ENCODE measurements at regions of chr10 and their contacts with region 1.

Region 1: GRCh38 chr10:110279407-110279986 is 25.2 kb downstream of the SMNDC1 start:
- DNase-seq: peak; percentile 58
- ATAC-seq: peak; percentile 53
- H3K4me3 Mint-ChIP-seq: no peak overlapping the region
- H3K27ac Mint-ChIP-seq: no peak overlapping the region
- H3K4me1 Mint-ChIP-seq: peaks cover 17% of the 10 kb centered on the region
- H3K27me3 Mint-ChIP-seq: peaks cover 19% of the 10 kb centered on the region

Region 2: GRCh38 chr10:110210674-110211464 is 68.6 kb before region 1 on chr10:
- CTCF ChIA-PET with region 1: interaction called, 89 read pairs
- POLR2A ChIA-PET with region 1: interaction called, 3 read pairs
- DNase-seq: peak; percentile 94
- ATAC-seq: peak; percentile 68
- H3K4me3 Mint-ChIP-seq: peak overlapping the region; percentile 90
- H3K27ac Mint-ChIP-seq: peak overlapping the region; percentile 84
- H3K4me1 Mint-ChIP-seq: peaks cover 56% of the 10 kb centered on the region
- H3K27me3 Mint-ChIP-seq: peaks cover 15% of the 10 kb centered on the region

Region 3: DNA sequence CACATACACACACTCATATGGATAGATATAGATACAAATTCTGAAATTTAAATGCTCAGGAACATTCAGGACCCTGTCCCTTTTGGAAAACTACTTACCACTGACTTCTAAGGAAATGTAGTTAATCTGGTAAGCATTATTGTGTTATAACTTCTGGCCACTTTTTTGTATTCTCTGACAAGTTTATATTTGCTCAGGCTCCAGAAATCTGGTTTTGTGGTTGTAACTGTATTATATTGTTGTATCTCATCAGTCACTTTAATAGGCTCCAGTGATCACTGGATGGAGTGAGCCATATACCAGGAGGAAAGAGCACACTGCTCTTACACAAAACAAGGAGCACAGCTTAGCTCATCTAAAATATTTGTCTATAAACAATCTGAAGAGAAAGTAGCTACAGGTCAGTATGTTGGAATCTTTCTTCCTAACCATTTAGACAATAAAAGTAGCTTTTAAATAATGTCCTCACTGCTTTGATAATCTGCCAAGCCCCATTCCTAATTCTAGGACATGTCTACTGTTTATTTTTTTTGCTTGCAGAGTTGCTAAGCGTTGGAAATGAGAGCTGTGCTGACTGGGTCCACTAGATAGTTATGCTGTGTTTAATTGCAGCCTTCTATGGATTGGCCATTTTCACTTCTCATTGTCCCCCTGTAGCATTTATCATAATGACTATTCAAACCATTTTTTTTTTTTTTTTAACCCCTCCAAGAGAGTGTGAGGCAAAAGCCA is 18.6 kb before region 1 on chr10:
- CTCF ChIA-PET with region 1: interaction called, 14 read pairs
- POLR2A ChIA-PET with region 1: no interaction called
- DNase-seq: no peak
- ATAC-seq: no peak
- H3K4me3 Mint-ChIP-seq: no peak overlapping the region
- H3K27ac Mint-ChIP-seq: no peak overlapping the region
- H3K4me1 Mint-ChIP-seq: no peaks in the 10 kb centered on the region
- H3K27me3 Mint-ChIP-seq: peaks cover 12% of the 10 kb centered on the region

Region 4: GRCh38 chr10:110326351-110327032 is 47.0 kb after region 1 on chr10:
- CTCF ChIA-PET with region 1: no interaction called
- POLR2A ChIA-PET with region 1: no interaction called
- DNase-seq: no peak
- ATAC-seq: no peak
- H3K4me3 Mint-ChIP-seq: no peak overlapping the region
- H3K27ac Mint-ChIP-seq: no peak overlapping the region
- H3K4me1 Mint-ChIP-seq: peaks cover 10% of the 10 kb centered on the region
- H3K27me3 Mint-ChIP-seq: peaks cover 24% of the 10 kb centered on the region